ENCODE measurements at regions of chr16 and their contacts with region 1.

Region 1: DNA sequence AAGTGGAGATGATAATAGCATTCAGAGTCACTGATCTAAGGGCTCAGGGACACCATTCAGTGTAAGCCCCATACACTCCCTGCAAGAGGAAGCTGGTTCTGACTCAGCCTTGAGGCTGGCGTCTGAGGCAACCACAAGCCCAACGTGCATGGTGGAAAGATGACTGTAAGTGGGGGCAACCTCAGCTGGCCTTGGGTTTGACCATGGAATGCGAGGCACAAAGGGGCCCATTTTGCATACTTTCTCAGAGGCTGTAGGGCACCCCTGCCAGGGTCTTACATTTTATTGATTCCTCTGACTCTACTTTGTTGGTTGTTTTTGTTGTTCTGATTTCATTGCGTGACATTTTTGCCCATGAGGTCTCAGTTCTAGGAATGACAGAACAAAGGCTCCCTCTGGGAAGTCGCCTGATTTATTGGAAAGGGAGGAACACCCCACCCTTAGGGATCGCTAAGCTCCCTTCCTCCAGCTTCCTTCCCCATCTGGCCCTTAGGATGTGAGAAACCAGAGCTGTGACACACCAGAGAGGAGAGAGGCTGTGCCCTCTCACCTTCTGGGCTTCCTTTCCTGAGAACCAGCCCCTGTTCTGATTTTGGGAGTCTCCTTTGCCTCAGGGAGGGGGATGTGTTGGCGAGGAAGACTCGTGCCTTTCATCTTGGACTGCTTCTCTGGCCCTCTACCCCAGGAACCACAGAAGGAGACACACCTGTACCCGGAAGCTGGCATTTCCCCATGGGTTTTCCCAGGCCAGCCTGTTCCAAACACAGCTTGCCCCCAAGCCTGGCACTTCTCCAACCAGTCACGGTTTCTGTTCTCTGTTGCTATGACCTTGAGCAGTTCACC is 5.6 kb upstream of the CIITA start:
- DNase-seq: peak; percentile 73
- ATAC-seq: peak; percentile 37
- H3K4me3 ChIP-seq: peak overlapping the region in 3 of 5 experiments; percentile 3 to 6 (median 3)
- H3K4me3 Mint-ChIP-seq: peak overlapping the region; percentile 83
- H3K27ac ChIP-seq: peak overlapping the region; percentile 91 to 92
- H3K27ac Mint-ChIP-seq: peak overlapping the region; percentile 93
- H3K4me1 ChIP-seq: peaks cover 93 to 98% of the 10 kb centered on the region in 2 donors
- H3K4me1 Mint-ChIP-seq: peaks cover 95% of the 10 kb centered on the region
- H3K27me3 ChIP-seq: no peaks in the 10 kb centered on the region
- H3K27me3 Mint-ChIP-seq: no peaks in the 10 kb centered on the region
- CTCF ChIP-seq: no peak

Region 2: DNA sequence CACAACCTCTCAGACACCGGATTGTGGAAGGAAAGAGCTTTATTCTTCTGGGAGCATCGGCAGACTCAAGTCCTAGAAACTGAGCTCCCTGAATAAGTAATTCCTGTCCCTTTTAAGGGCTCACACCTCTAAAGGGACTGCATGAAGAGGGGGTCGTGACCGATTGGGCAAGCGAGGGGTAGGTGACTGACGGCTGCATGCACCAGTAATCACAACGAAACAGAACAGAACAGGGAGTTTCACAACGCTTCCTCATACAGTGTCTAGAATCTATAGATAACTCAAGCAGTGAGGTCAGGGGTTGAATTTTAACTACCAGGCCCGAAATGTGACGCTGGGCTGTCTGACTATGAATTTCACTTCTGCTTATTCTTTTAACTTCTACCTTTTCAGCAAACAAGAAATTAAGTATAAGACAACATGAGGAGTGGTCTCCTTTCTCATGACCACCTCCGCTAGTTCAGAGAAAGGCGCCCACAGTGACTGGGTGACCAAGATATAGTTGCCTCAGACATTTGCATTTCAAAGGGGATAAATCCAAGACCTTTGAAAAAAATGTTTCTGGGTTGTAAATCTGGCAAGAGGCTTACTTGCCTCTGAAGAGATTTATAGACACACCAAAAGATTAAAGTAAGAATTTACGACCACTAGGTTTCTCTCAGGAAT is 573.9 kb before region 1 on chr16:
- CTCF ChIA-PET with region 1: no interaction called
- POLR2A ChIA-PET with region 1: no interaction called
- intact Hi-C with region 1: loop called (anchors 5 kb)
- DNase-seq: peak; percentile 90
- ATAC-seq: peak; percentile 96
- H3K4me3 ChIP-seq: peak overlapping the region in 4 of 5 experiments; percentile 27 to 61 (median 42)
- H3K4me3 Mint-ChIP-seq: peak overlapping the region; percentile 75
- H3K27ac ChIP-seq: peak overlapping the region; percentile 99 to 100
- H3K27ac Mint-ChIP-seq: peak overlapping the region; percentile 95
- H3K4me1 ChIP-seq: peaks cover 38 to 43% of the 10 kb centered on the region in 2 donors
- H3K4me1 Mint-ChIP-seq: peaks cover 53% of the 10 kb centered on the region
- H3K27me3 ChIP-seq: no peaks in the 10 kb centered on the region
- H3K27me3 Mint-ChIP-seq: no peaks in the 10 kb centered on the region
- CTCF ChIP-seq: no peak

Region 3: DNA sequence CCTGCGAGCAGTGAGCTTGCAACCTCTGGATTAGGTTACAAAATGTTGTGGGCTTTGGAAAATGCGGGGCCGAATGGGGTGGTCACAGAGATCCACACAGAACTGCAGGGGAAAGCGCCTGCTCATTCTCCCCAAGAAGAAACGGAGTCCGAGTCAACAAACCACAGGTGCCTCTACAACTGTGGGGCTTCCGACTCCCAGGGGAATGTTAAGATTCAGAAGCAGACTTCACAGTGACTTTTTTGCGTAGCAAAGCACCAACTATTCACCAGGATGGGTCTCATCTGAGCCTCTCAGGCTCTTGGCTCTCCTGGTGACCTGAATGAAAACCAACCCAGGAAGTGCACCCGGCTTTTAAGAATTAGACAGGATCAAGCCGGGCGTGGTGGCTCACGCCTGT is 94.0 kb before region 1 on chr16:
- CTCF ChIA-PET with region 1: no interaction called
- POLR2A ChIA-PET with region 1: interaction called, 10 read pairs
- intact Hi-C with region 1: no loop called
- DNase-seq: no peak
- ATAC-seq: no peak
- H3K4me3 ChIP-seq: no peak overlapping the region
- H3K4me3 Mint-ChIP-seq: peak overlapping the region; percentile 26
- H3K27ac ChIP-seq: no peak overlapping the region
- H3K27ac Mint-ChIP-seq: no peak overlapping the region
- H3K4me1 ChIP-seq: peaks cover 0 to 23% of the 10 kb centered on the region in 2 donors
- H3K4me1 Mint-ChIP-seq: peaks cover 43% of the 10 kb centered on the region
- H3K27me3 ChIP-seq: no peaks in the 10 kb centered on the region
- H3K27me3 Mint-ChIP-seq: no peaks in the 10 kb centered on the region
- CTCF ChIP-seq: no peak

Region 4: GRCh38 chr16:10831894-10832886 is 39.2 kb before region 1 on chr16:
- CTCF ChIA-PET with region 1: interaction called, 6 read pairs
- POLR2A ChIA-PET with region 1: interaction called, 4 read pairs
- intact Hi-C with region 1: loop called (anchors 1 kb)
- DNase-seq: peak; percentile 38
- ATAC-seq: peak; percentile 78
- H3K4me3 ChIP-seq: no peak overlapping the region
- H3K4me3 Mint-ChIP-seq: peak overlapping the region; percentile 38
- H3K27ac ChIP-seq: no peak overlapping the region
- H3K27ac Mint-ChIP-seq: peak overlapping the region; percentile 60
- H3K4me1 ChIP-seq: peaks cover 41 to 53% of the 10 kb centered on the region in 2 donors
- H3K4me1 Mint-ChIP-seq: peaks cover 66% of the 10 kb centered on the region
- H3K27me3 ChIP-seq: no peaks in the 10 kb centered on the region
- H3K27me3 Mint-ChIP-seq: no peaks in the 10 kb centered on the region
- CTCF ChIP-seq: no peak

Region 5: DNA sequence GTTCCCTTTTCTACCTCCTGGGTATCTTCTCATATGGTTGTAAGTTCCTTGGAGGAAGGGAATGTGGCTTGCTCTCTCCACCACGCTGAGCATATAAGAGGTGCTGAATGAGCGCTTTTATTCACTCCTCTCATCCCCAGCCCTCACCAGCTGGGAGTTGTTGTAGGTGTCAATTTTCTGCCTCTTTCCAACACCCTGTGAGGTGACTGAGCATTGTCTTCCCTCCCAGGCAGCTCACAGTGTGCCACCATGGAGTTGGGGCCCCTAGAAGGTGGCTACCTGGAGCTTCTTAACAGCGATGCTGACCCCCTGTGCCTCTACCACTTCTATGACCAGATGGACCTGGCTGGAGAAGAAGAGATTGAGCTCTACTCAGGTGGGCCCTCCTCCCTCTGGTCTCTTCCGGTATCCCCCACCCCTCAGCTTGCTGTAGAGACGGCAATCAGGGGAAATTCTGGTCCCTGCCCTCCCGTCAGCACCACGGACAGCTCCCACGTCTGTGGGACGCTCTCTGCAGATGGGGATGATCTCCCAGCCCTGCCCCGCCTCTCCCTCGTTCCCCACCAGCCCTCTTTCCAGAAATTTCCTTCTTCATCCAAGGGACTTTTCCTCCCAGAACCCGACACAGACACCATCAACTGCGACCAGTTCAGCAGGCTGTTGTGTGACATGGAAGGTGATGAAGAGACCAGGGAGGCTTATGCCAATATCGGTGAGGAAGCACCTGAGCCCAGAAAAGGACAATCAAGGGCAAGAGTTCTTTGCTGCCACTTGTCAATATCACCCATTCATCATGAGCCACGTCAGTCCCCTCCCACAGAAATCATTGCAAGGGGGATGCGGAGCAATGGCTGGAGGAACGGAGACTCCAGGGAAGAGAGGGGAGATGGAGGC is 23.9 kb after region 1 on chr16:
- CTCF ChIA-PET with region 1: interaction called, 120 read pairs
- POLR2A ChIA-PET with region 1: interaction called, 122 read pairs
- intact Hi-C with region 1: loop called (anchors 1 kb)
- DNase-seq: peak; percentile 72
- ATAC-seq: no peak
- H3K4me3 ChIP-seq: no peak overlapping the region
- H3K4me3 Mint-ChIP-seq: peak overlapping the region; percentile 78
- H3K27ac ChIP-seq: peak overlapping the region; percentile 68 to 77
- H3K27ac Mint-ChIP-seq: peak overlapping the region; percentile 92
- H3K4me1 ChIP-seq: peaks cover 88 to 93% of the 10 kb centered on the region in 2 donors
- H3K4me1 Mint-ChIP-seq: peaks cover 93% of the 10 kb centered on the region
- H3K27me3 ChIP-seq: no peaks in the 10 kb centered on the region
- H3K27me3 Mint-ChIP-seq: no peaks in the 10 kb centered on the region
- CTCF ChIP-seq: no peak

Region 6: DNA sequence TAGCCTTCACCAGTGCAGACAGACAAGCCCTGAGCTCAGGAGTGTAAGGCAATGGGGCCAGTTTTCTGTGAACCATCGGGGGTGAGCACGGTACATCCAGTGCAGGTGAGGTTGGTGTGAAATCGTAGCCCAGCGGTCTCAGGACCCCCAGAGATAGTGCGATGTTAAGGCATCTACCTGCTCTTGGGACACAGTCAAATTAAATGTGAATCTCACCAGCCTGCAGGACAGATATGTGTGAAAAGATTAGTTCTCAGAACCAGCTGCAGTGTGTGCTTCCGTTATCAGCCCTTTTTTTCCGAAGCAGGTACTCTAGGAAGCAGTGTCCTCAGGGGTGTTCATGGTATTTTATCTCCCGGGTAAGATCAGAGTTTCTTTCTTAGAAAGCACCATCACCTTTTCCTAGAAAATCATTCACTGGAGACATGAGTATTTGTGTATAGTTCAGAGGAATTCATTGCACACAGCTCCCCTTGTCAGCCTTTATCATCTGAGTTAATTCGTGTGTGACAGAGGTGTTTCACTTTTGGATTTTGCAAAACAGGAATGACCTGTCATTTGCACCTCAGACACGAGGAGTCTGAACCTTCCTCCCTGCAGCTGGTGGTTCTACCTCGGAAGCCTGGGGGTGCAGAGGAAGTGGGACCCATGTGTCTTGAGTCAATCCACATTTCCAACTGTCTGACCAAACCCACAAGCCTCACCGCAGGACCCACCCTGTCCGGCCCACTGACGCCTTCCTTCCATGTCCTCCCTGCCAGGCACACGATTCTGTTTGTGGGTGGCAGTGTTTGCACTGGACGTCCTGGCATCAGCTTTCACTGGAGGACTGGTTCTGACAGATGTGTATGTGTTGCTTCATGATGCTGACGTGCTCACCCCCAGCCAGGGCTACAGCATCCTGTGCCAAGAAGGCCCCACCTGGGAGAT is 180.8 kb after region 1 on chr16:
- CTCF ChIA-PET with region 1: no interaction called
- POLR2A ChIA-PET with region 1: no interaction called
- intact Hi-C with region 1: no loop called
- DNase-seq: peak; percentile 24
- ATAC-seq: peak; percentile 61
- H3K4me3 ChIP-seq: no peak overlapping the region
- H3K4me3 Mint-ChIP-seq: no peak overlapping the region
- H3K27ac ChIP-seq: no peak overlapping the region
- H3K27ac Mint-ChIP-seq: peak overlapping the region; percentile 4
- H3K4me1 ChIP-seq: peaks cover 11 to 14% of the 10 kb centered on the region in 2 donors
- H3K4me1 Mint-ChIP-seq: peaks cover 19% of the 10 kb centered on the region
- H3K27me3 ChIP-seq: no peaks in the 10 kb centered on the region
- H3K27me3 Mint-ChIP-seq: no peaks in the 10 kb centered on the region
- CTCF ChIP-seq: no peak